ENCODE measurements at regions of chr5 and their contacts with region 1.

Region 1: DNA sequence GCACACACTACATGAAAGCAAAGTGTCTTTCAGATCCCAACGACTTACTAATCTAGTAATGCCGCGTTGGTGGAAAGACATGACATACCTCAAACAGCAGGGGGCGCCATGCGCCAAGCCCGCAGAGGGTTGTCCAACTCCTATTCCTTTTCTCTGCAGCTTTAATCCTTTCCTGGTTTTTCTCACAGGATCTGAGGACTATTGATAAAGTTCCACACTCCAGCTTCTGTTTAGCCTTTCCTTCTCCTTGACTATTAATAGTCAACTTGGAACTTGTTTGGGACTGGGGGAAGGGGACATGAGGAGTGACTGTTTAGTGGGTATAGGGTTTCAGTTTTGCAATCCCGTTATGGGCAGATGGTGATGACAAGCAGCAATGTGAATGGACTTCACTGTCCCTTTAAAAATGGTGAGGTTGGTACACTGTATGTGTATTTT is 62.9 kb downstream of the OTULIN start:
- DNase-seq: peak; percentile 72 to 86
- H3K4me3 ChIP-seq: no peak overlapping the region
- H3K4me3 Mint-ChIP-seq: no peak overlapping the region
- H3K27ac Mint-ChIP-seq: no peak overlapping the region
- H3K4me1 ChIP-seq: peaks cover 14% of the 10 kb centered on the region
- H3K4me1 Mint-ChIP-seq: no peaks in the 10 kb centered on the region
- H3K27me3 ChIP-seq: no peaks in the 10 kb centered on the region
- H3K27me3 Mint-ChIP-seq: no peaks in the 10 kb centered on the region
- CTCF ChIP-seq: peak; percentile 92 to 93

Region 2: GRCh38 chr5:14753912-14754311 is 26.5 kb after region 1 on chr5:
- CTCF ChIA-PET with region 1: no interaction called
- POLR2A ChIA-PET with region 1: no interaction called
- intact Hi-C with region 1: loop called (anchors 1 kb)
- DNase-seq: no peak
- H3K4me3 ChIP-seq: no peak overlapping the region
- H3K4me3 Mint-ChIP-seq: no peak overlapping the region
- H3K27ac Mint-ChIP-seq: no peak overlapping the region
- H3K4me1 ChIP-seq: peaks cover 16% of the 10 kb centered on the region
- H3K4me1 Mint-ChIP-seq: peaks cover 22% of the 10 kb centered on the region
- H3K27me3 ChIP-seq: no peaks in the 10 kb centered on the region
- H3K27me3 Mint-ChIP-seq: peaks cover 2% of the 10 kb centered on the region
- CTCF ChIP-seq: no peak

Region 3: GRCh38 chr5:14778792-14779070 is 51.3 kb after region 1 on chr5:
- CTCF ChIA-PET with region 1: no interaction called
- POLR2A ChIA-PET with region 1: no interaction called
- intact Hi-C with region 1: loop called (anchors 1 kb)
- DNase-seq: no peak
- H3K4me3 ChIP-seq: no peak overlapping the region
- H3K4me3 Mint-ChIP-seq: no peak overlapping the region
- H3K27ac Mint-ChIP-seq: no peak overlapping the region
- H3K4me1 ChIP-seq: no peaks in the 10 kb centered on the region; the same call in none of the 2 replicates
- H3K4me1 Mint-ChIP-seq: peaks cover 13% of the 10 kb centered on the region
- H3K27me3 ChIP-seq: no peaks in the 10 kb centered on the region
- H3K27me3 Mint-ChIP-seq: no peaks in the 10 kb centered on the region
- CTCF ChIP-seq: no peak

Region 4: GRCh38 chr5:14871210-14872069 is 144.0 kb after region 1 on chr5 and contains the start of gene ANKH:
- CTCF ChIA-PET with region 1: no interaction called
- POLR2A ChIA-PET with region 1: no interaction called
- intact Hi-C with region 1: loop called (anchors 1 kb)
- DNase-seq: peak; percentile 61 to 86
- H3K4me3 ChIP-seq: peak within 1 kb of the TSS; percentile 67
- H3K4me3 Mint-ChIP-seq: peak within 1 kb of the TSS; percentile 70
- H3K27ac Mint-ChIP-seq: no peak within 1 kb of the TSS
- H3K4me1 ChIP-seq: no peaks in the 10 kb centered on the region
- H3K4me1 Mint-ChIP-seq: peaks cover 13% of the 10 kb centered on the region
- H3K27me3 ChIP-seq: peaks cover 2% of the 10 kb centered on the region
- H3K27me3 Mint-ChIP-seq: peaks cover 19% of the 10 kb centered on the region
- CTCF ChIP-seq: peak in 1 of 2 experiments; percentile 16
- total RNA-seq, gene ANKH: 4.7 and 6.3 TPM in 2 replicates

Region 5: DNA sequence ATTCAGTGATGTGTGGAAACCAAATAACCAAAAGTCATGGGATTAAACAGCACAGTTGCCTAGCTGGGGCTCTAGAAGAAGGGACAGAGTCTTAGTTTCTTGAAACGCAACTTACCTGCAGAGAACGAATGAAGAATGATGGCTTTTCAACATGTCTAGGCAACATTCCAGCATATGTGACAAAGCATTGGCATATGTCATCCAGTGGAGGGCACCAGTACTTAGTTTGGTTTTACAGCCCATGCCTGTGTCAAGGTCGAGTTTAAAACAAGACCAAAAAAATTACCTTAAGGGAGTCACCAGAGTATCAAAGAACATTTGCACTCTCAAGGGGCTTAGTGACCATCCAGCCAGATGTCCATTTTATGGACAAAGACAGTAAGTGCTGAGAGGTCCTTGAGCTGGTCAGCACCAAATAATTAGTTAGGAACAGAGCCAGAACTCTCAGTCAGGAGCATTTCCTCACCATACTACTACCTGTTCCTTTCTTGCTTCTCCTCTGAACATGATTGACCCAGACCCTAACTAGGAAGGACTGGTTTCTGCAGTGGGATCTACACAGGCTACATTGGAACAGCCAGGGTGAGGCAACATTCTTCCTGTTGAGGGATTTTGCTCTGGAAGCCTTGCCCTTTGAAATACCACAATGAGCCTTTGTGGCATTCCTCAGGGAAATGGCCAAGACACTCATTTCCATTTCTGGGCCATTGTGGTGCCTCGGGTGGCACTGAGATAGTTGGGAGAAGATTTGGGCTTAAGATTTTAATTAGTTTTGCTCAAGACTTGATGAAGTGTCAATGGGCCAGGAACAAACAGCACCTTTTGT is 219.6 kb after region 1 on chr5:
- CTCF ChIA-PET with region 1: no interaction called
- POLR2A ChIA-PET with region 1: no interaction called
- intact Hi-C with region 1: loop called (anchors 5 kb)
- DNase-seq: peak in 1 of 2 experiments; percentile 43
- H3K4me3 ChIP-seq: no peak overlapping the region
- H3K4me3 Mint-ChIP-seq: no peak overlapping the region
- H3K27ac Mint-ChIP-seq: no peak overlapping the region
- H3K4me1 ChIP-seq: no peaks in the 10 kb centered on the region
- H3K4me1 Mint-ChIP-seq: no peaks in the 10 kb centered on the region
- H3K27me3 ChIP-seq: no peaks in the 10 kb centered on the region
- H3K27me3 Mint-ChIP-seq: no peaks in the 10 kb centered on the region
- CTCF ChIP-seq: peak; percentile 48 to 63

Region 6: GRCh38 chr5:15003511-15003920 is 276.1 kb after region 1 on chr5:
- CTCF ChIA-PET with region 1: interaction called, 6 read pairs
- POLR2A ChIA-PET with region 1: no interaction called
- intact Hi-C with region 1: loop called (anchors 1 kb)
- DNase-seq: peak; percentile 55 to 58
- H3K4me3 ChIP-seq: no peak overlapping the region
- H3K4me3 Mint-ChIP-seq: no peak overlapping the region
- H3K27ac Mint-ChIP-seq: no peak overlapping the region
- H3K4me1 ChIP-seq: peaks cover 5% of the 10 kb centered on the region
- H3K4me1 Mint-ChIP-seq: peaks cover 5% of the 10 kb centered on the region
- H3K27me3 ChIP-seq: no peaks in the 10 kb centered on the region
- H3K27me3 Mint-ChIP-seq: peaks cover 12% of the 10 kb centered on the region
- CTCF ChIP-seq: peak; percentile 68 to 79

Region 7: GRCh38 chr5:15013654-15014463 is 286.4 kb after region 1 on chr5:
- CTCF ChIA-PET with region 1: interaction called, 5 read pairs
- POLR2A ChIA-PET with region 1: no interaction called
- intact Hi-C with region 1: loop called (anchors 1 kb)
- DNase-seq: peak in 1 of 2 experiments; percentile 66
- H3K4me3 ChIP-seq: no peak overlapping the region
- H3K4me3 Mint-ChIP-seq: no peak overlapping the region
- H3K27ac Mint-ChIP-seq: no peak overlapping the region
- H3K4me1 ChIP-seq: peaks cover 33% of the 10 kb centered on the region
- H3K4me1 Mint-ChIP-seq: peaks cover 24% of the 10 kb centered on the region
- H3K27me3 ChIP-seq: no peaks in the 10 kb centered on the region
- H3K27me3 Mint-ChIP-seq: no peaks in the 10 kb centered on the region
- CTCF ChIP-seq: peak; percentile 60 to 61

Measured in Caco-2 (cell line).